H1 (cell line): ENCODE measurements at regions of chr20 and their contacts with region 1.

Region 1: GRCh38 chr20:60851826-60852704 is 400.0 kb upstream of the CDH4 start:
- DNase-seq: peak; percentile 27 to 72
- H3K4me3 ChIP-seq: no peak overlapping the region
- H3K27ac ChIP-seq: no peak overlapping the region
- H3K4me1 ChIP-seq: no peaks in the 10 kb centered on the region
- H3K27me3 ChIP-seq: no peaks in the 10 kb centered on the region
- CTCF ChIP-seq: peak; percentile 84 to 88 (median 87)
- EP300 ChIP-seq: no peak
- POLR2A ChIP-seq: no peak
- RAD21 ChIP-seq: peak; percentile 95 to 97

Region 2: DNA sequence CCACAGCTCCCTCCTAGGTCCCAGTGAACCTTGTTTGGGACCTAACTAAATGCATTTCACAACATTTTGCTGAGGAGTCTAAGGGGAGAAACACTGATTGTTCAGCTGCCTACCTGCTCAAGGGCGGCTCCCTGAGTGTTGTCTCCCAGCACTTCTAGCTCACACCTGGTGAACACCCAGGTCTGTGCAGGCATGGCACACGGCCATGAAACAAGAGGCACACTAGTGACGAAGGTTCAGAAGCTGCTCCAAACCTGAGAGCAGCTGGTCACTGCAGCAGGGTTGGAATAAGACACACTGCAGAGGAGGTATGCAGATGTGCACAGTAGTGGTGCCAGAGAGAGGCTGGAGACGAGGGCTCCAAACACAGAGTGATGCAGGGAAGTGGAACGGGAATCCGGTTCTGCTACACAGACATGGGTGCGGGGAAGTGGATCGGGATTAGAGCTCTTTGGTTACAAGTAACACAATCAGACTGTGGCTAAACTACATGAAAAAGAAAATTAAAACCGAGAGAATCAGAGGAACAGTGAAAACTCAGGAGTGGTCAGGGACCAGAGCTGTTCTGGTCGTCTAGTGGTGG is 86.2 kb before region 1 on chr20:
- CTCF ChIA-PET with region 1: no interaction called
- POLR2A ChIA-PET with region 1: no interaction called
- DNase-seq: no peak
- H3K4me3 ChIP-seq: no peak overlapping the region
- H3K27ac ChIP-seq: no peak overlapping the region
- H3K4me1 ChIP-seq: no peaks in the 10 kb centered on the region
- H3K27me3 ChIP-seq: no peaks in the 10 kb centered on the region; a peak in 1 of 7 replicates
- CTCF ChIP-seq: no peak
- EP300 ChIP-seq: no peak
- POLR2A ChIP-seq: no peak
- RAD21 ChIP-seq: no peak

Region 3: GRCh38 chr20:61117725-61118124 is 265.7 kb after region 1 on chr20:
- CTCF ChIA-PET with region 1: interaction called, 11 read pairs
- POLR2A ChIA-PET with region 1: no interaction called
- DNase-seq: no peak
- H3K4me3 ChIP-seq: no peak overlapping the region
- H3K27ac ChIP-seq: no peak overlapping the region
- H3K4me1 ChIP-seq: peaks cover 0 to 5% (median 0%) of the 10 kb centered on the region in 4 experiments; a peak in 1 of 7 replicates
- H3K27me3 ChIP-seq: peaks cover 0 to 5% (median 3%) of the 10 kb centered on the region in 4 experiments; a peak in 4 of 7 replicates
- CTCF ChIP-seq: no peak
- EP300 ChIP-seq: no peak
- POLR2A ChIP-seq: no peak
- RAD21 ChIP-seq: no peak